H1 (cell line): ENCODE measurements at regions of chr2 and their contacts with region 1.

Region 1: DNA sequence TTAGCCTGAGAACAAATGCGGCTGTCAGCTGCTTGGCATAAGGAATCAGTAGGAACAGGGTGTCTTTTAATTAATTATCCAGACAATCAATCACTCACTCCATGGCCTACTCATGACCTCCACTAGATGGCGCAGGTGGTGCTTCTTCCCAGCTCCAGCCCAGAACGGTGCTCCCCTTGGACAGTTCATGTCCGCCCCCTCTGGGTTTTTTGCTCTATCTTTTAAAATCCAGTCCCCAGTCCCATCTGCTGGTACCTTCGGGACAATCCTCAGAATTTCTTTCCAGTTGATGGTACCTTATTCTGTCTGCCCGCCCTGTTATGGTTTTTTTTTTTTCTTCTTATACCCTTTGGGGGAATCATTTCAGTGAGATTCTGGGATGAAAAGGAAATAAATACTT is 99.8 kb downstream of the CACNB4 start:
- DNase-seq: peak in 1 of 2 experiments; percentile 79
- H3K4me3 ChIP-seq: no peak overlapping the region
- H3K27ac ChIP-seq: no peak overlapping the region
- H3K4me1 ChIP-seq: peaks cover 2 to 11% (median 5%) of the 10 kb centered on the region in 4 experiments; a peak in 5 of 7 replicates
- H3K27me3 ChIP-seq: no peaks in the 10 kb centered on the region
- CTCF ChIP-seq: peak; percentile 88 to 95 (median 92)
- EP300 ChIP-seq: no peak
- POLR2A ChIP-seq: no peak
- RAD21 ChIP-seq: peak; percentile 70 to 76

Region 2: GRCh38 chr2:151973901-151974199 is 25.2 kb before region 1 on chr2:
- CTCF ChIA-PET with region 1: interaction called, 19 read pairs
- POLR2A ChIA-PET with region 1: no interaction called
- DNase-seq: peak; percentile 7 to 55
- H3K4me3 ChIP-seq: no peak overlapping the region
- H3K27ac ChIP-seq: no peak overlapping the region
- H3K4me1 ChIP-seq: peaks cover 0 to 5% (median 3%) of the 10 kb centered on the region in 4 experiments; a peak in 3 of 7 replicates
- H3K27me3 ChIP-seq: no peaks in the 10 kb centered on the region
- CTCF ChIP-seq: no peak
- EP300 ChIP-seq: no peak
- POLR2A ChIP-seq: no peak
- RAD21 ChIP-seq: no peak

Region 3: GRCh38 chr2:151984424-151985083 is 14.5 kb before region 1 on chr2:
- CTCF ChIA-PET with region 1: interaction called, 22 read pairs
- POLR2A ChIA-PET with region 1: no interaction called
- DNase-seq: no peak
- H3K4me3 ChIP-seq: no peak overlapping the region
- H3K27ac ChIP-seq: no peak overlapping the region
- H3K4me1 ChIP-seq: no peaks in the 10 kb centered on the region
- H3K27me3 ChIP-seq: no peaks in the 10 kb centered on the region
- CTCF ChIP-seq: no peak
- EP300 ChIP-seq: no peak
- POLR2A ChIP-seq: no peak
- RAD21 ChIP-seq: no peak

Region 4: GRCh38 chr2:152012697-152013096 is 13.6 kb after region 1 on chr2:
- CTCF ChIA-PET with region 1: interaction called, 22 read pairs
- POLR2A ChIA-PET with region 1: no interaction called
- DNase-seq: no peak
- H3K4me3 ChIP-seq: no peak overlapping the region
- H3K27ac ChIP-seq: no peak overlapping the region
- H3K4me1 ChIP-seq: no peaks in the 10 kb centered on the region
- H3K27me3 ChIP-seq: no peaks in the 10 kb centered on the region
- CTCF ChIP-seq: no peak
- EP300 ChIP-seq: no peak
- POLR2A ChIP-seq: no peak
- RAD21 ChIP-seq: no peak

Region 5: GRCh38 chr2:152019732-152020131 is 20.7 kb after region 1 on chr2:
- CTCF ChIA-PET with region 1: interaction called, 67 read pairs
- POLR2A ChIA-PET with region 1: no interaction called
- DNase-seq: no peak
- H3K4me3 ChIP-seq: no peak overlapping the region
- H3K27ac ChIP-seq: no peak overlapping the region
- H3K4me1 ChIP-seq: no peaks in the 10 kb centered on the region
- H3K27me3 ChIP-seq: no peaks in the 10 kb centered on the region
- CTCF ChIP-seq: no peak
- EP300 ChIP-seq: no peak
- POLR2A ChIP-seq: no peak
- RAD21 ChIP-seq: no peak